ENCODE measurements at regions of chr19 and their contacts with region 1.

Region 1: GRCh38 chr19:40139533-40140287 is 49.0 kb upstream of the ZNF780A start:
- DNase-seq: peak in 1 of 2 donors; percentile 70
- H3K4me3 ChIP-seq: no peak overlapping the region
- H3K27ac ChIP-seq: no peak overlapping the region
- H3K4me1 ChIP-seq: peaks cover 0 to 3% (median 0%) of the 10 kb centered on the region in 4 donors
- H3K27me3 ChIP-seq: peaks cover 0 to 24% (median 0%) of the 10 kb centered on the region in 3 donors
- CTCF ChIP-seq: peak in 5 of 7 experiments; percentile 37 to 74 (median 60)
- EP300 ChIP-seq: no peak
- POLR2A ChIP-seq: no peak

Region 2: GRCh38 chr19:40221858-40222837 is 82.4 kb after region 1 on chr19:
- intact Hi-C with region 1: loop called (anchors 5 kb)
- DNase-seq: peak; percentile 77 to 93
- H3K4me3 ChIP-seq: no peak overlapping the region
- H3K27ac ChIP-seq: no peak overlapping the region
- H3K4me1 ChIP-seq: peaks cover 13 to 46% (median 35%) of the 10 kb centered on the region in 4 donors
- H3K27me3 ChIP-seq: peaks cover 18 to 97% (median 65%) of the 10 kb centered on the region in 3 donors
- CTCF ChIP-seq: peak in 5 of 7 experiments; percentile 77 to 91 (median 90)
- EP300 ChIP-seq: no peak
- POLR2A ChIP-seq: no peak